ENCODE measurements at regions of chr16 and their contacts with region 1.

Region 1: DNA sequence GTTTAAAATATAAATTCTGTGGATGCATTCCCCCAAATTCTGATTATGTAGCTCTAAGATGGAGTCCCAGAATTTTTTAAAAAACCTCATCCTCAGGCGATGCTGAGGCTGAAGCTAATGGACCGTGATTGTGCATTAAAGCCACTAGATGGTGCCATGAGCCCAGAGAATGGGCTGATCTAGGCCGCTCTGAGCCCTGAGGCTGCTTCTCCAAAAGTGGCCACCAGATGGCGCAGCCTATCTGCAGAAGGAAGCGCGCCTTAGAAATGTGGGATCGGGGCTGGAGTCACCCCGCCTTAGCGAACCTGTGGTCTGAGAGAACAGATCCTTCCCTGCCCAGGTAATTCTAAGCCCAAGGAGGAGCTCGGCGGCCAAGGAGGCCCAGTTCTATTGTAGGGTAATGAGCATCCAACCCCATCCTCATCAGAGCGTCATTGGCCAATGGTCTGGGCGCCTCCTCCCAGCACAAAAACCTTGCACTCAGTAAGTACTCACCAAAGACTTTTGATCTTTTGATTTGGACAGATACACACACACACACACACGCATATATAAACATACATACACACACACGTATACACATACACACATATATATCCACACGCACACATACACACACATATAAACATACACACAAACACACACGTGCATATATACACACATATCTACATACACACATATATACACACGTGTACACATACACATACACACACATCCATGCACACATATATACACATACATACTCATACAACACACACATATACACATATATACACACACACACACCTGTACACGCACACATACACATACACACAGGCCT is 13.7 kb upstream of the MMP2 start:
- DNase-seq: peak; percentile 86
- H3K4me3 ChIP-seq: no peak overlapping the region
- H3K27ac ChIP-seq: no peak overlapping the region
- H3K4me1 ChIP-seq: peaks cover 2% of the 10 kb centered on the region
- H3K27me3 ChIP-seq: no peaks in the 10 kb centered on the region
- CTCF ChIP-seq: peak; percentile 100

Region 2: DNA sequence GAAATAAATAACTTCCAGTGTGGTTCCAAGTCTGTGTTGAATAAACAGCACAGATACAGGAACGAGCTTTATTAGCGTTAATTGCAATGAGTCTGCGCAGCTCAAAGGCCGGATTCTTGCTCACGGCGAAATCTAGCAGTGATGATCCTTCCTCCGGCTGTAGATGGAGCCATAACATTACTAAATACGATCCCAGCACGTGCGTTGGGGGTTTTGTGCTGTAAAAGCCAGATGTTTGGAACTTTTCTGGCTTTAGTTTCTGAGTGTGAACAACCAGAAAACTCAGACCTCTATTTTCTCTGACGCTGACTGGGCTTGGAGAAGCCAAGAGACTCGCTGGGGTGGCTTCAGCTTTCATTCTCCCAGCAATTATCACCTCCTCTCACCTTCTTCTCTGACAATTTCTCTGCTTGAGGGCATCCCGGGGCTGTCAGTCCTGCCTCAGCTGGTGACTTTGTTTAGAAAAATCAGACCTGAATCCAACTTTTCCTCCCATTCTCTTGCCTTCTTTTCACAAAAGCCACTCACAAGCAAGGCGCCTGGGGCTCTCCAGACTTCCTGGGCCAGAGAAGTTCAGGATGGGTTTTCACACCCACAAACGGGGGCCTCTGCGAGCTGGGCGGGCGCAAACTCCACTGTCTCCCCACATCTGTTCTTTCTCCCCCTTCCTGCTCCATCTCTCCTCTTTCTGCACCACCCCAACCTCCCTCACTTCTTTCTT is 1915.2 kb before region 1 on chr16:
- CTCF ChIA-PET with region 1: interaction called, 3 read pairs
- POLR2A ChIA-PET with region 1: no interaction called
- intact Hi-C with region 1: loop called (anchors 5 kb)
- DNase-seq: peak; percentile 90
- H3K4me3 ChIP-seq: no peak overlapping the region
- H3K27ac ChIP-seq: no peak overlapping the region
- H3K4me1 ChIP-seq: no peaks in the 10 kb centered on the region
- H3K27me3 ChIP-seq: no peaks in the 10 kb centered on the region
- CTCF ChIP-seq: peak; percentile 85

Region 3: DNA sequence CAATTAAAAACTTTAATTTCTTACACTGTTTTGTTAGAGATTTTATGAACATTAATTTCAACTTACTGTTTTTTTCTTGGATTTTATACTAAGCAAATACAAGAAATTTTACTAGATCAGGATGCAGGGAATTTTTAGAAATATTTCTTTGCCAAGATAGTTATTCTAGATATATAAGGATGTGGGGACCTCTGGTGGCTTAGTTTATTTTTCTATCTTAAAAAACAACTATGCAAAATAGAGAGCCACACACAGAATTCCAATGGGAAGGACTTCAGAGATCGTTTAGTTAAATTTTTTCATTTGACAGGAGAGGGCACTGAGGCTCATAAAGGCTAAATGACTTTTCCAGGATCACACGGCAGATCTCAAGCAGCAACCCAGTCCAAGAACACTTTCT is 78.2 kb after region 1 on chr16:
- CTCF ChIA-PET with region 1: interaction called, 14 read pairs
- POLR2A ChIA-PET with region 1: no interaction called
- intact Hi-C with region 1: loop called (anchors 1 kb)
- DNase-seq: peak; percentile 44
- H3K4me3 ChIP-seq: no peak overlapping the region
- H3K27ac ChIP-seq: no peak overlapping the region
- H3K4me1 ChIP-seq: no peaks in the 10 kb centered on the region
- H3K27me3 ChIP-seq: no peaks in the 10 kb centered on the region
- CTCF ChIP-seq: peak; percentile 51; the same call in 1 of the 2 replicates

Region 4: GRCh38 chr16:55597928-55598327 is 132.6 kb after region 1 on chr16:
- CTCF ChIA-PET with region 1: no interaction called
- POLR2A ChIA-PET with region 1: no interaction called
- intact Hi-C with region 1: no loop called
- DNase-seq: no peak
- H3K4me3 ChIP-seq: no peak overlapping the region
- H3K27ac ChIP-seq: no peak overlapping the region
- H3K4me1 ChIP-seq: no peaks in the 10 kb centered on the region
- H3K27me3 ChIP-seq: peaks cover 11% of the 10 kb centered on the region
- CTCF ChIP-seq: no peak

Region 5: DNA sequence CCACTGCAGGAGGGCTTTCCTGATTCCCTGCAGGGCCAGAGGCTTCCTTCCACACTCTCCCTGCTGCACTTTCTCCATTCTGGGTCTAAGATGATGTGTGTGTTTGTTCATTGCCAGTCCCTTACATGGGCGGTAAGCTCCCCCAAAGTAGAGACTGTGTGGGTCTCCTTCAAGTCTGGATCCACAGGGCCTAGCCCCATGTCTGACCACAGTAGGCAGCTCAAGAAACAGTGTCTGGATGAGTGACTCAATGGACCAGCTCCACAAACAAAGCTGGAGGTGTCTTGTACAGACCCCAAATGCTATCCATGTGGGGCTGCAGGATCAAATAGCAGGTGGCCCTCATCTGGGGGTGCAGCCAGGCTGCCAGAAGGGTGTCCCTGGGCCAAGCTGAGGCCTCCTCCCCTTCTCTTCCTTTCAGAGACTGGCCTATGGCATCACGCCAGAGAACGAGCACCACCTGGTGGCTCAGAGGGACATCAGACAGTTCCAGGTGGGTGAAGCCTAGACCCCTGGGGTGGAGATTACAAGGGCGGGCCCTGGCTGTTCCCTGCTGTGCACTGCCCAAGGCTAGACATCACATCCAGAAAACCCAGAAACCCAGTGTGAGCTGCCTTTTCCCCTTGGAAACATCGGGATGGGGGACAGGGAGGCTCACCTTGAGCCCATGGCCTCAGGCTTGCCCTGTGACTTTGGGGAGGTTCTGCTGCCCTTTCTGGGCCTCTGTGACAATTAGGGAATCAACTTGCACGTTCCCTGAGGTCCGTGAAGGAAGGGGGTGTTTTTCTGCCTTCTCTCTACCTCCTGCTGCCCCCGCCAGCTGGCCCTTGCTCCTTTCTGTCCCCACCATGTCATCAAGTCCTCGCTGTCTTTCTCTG is 236.4 kb after region 1 on chr16:
- CTCF ChIA-PET with region 1: interaction called, 13 read pairs
- POLR2A ChIA-PET with region 1: no interaction called
- intact Hi-C with region 1: loop called (anchors 1 kb)
- DNase-seq: peak; percentile 61
- H3K4me3 ChIP-seq: no peak overlapping the region
- H3K27ac ChIP-seq: no peak overlapping the region
- H3K4me1 ChIP-seq: peaks cover 11% of the 10 kb centered on the region
- H3K27me3 ChIP-seq: no peaks in the 10 kb centered on the region
- CTCF ChIP-seq: peak; percentile 62

Region 6: GRCh38 chr16:55842369-55843104 is 377.2 kb after region 1 on chr16:
- CTCF ChIA-PET with region 1: interaction called, 6 read pairs
- POLR2A ChIA-PET with region 1: no interaction called
- intact Hi-C with region 1: loop called (anchors 2 kb)
- DNase-seq: peak; percentile 77
- H3K4me3 ChIP-seq: no peak overlapping the region
- H3K27ac ChIP-seq: no peak overlapping the region
- H3K4me1 ChIP-seq: peaks cover 4% of the 10 kb centered on the region
- H3K27me3 ChIP-seq: no peaks in the 10 kb centered on the region
- CTCF ChIP-seq: peak; percentile 79

Region 7: DNA sequence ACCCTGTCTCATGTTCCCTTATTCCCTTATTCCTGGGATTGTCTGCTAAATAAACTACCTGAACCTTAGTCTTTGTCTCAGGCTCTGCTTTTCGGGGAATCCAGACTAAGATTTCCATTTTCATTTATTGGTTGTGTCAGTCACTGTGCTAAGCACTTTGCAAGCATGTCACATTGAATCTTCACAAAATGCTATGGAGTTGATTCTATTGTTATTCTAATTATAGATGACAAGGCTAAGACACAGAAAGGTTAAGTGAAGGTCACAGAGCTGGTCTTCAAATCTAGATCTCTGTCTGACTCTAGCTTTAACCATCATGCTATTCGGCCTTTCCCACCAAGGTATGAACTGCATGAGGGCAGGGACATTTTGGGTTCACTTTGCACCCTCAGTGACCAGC is 423.3 kb after region 1 on chr16:
- CTCF ChIA-PET with region 1: no interaction called
- POLR2A ChIA-PET with region 1: no interaction called
- intact Hi-C with region 1: no loop called
- DNase-seq: no peak
- H3K4me3 ChIP-seq: no peak overlapping the region
- H3K27ac ChIP-seq: no peak overlapping the region
- H3K4me1 ChIP-seq: no peaks in the 10 kb centered on the region
- H3K27me3 ChIP-seq: no peaks in the 10 kb centered on the region
- CTCF ChIP-seq: no peak

Region 8: DNA sequence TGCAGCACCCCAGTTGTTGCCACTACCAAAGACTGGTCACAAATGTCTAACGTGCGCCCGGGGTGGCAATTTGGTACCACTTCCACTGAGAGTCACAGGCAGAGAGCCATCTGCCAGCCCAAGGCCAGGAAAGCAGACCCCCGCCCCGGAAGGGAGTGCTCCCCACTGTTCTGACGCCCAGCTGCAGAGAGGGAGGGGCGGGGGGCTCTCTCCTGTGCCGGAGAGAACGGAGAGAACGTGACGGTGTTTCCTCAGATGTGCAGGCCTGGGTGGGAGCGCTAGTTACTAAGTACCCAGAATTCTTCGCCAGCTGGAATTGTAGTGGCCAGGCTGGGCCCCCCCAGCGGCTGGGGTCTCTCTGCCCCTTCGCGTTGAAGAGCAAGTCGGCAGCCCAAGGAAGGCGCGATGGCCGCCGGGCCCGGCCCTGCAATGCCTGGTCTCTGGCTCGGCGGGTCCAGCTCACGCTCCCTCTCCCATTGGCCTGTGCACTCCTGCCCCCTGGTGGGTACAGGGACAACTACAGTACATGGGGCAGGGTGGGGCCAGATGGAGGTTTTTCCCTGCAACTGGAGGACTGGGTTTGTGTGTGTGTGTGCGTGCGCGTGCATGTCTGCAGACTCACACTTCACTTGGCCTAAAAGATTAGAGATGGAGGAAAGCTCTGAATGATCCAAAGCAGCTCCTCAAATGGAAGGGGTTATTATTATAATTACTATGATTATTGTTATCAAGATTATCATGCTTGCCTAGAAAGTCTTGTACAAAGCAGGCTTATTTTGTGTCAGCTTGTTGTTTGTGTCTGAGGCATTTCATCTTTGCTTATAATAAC is 852.9 kb after region 1 on chr16:
- CTCF ChIA-PET with region 1: interaction called, 3 read pairs
- POLR2A ChIA-PET with region 1: no interaction called
- intact Hi-C with region 1: loop called (anchors 2 kb)
- DNase-seq: peak; percentile 84
- H3K4me3 ChIP-seq: no peak overlapping the region
- H3K27ac ChIP-seq: no peak overlapping the region
- H3K4me1 ChIP-seq: no peaks in the 10 kb centered on the region
- H3K27me3 ChIP-seq: no peaks in the 10 kb centered on the region
- CTCF ChIP-seq: peak; percentile 91

Measured in A673 (cell line).